ENCODE measurements at regions of chr6 and their contacts with region 1.

Region 1: DNA sequence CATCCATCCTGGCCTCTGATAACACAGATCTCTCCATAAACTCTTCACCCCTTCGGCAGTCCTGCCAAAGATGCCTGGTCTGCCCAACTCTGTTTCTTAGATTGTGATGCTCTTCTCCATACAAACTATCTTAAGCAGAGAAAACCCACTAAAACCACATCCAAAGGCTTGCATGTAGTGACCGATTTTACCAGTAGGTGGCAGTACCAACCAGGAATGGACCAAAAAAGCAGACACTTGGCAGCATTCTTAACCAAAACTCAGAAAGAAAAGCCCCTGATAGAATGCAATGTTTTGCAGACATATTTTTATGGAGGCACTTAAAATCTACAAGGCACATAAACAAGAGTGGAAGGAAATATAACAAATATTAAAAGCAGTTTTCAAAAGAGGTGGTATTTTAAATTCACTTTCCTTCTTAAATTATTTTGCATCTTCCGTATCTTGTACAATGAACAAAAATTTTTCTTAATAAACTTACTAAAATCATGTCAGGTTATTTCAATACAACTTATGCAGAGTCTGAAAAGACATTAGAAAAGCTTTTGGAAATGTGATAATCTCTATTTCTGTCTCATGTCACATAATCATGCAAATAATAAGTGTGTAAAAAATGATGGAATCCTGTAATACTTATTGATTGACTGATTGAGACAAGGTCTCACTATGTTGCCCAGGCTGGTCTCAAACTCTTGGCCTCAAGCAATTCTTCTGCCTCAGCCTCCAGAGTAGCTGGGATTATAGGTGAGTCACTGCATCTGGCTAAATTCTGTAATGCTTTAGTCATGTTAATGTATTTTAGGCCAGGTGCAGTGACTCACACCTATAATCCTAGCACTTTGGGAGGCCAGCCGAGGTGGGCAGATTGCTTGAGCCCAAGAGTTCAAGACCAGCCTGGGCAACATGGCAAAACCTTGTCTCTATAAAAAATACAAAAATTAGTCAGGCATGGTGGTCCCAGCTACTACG is 29.4 kb downstream of the LRP11 start:
- DNase-seq: peak; percentile 79
- ATAC-seq: peak; percentile 74
- H3K4me3 ChIP-seq: no peak overlapping the region
- H3K27ac ChIP-seq: no peak overlapping the region
- H3K4me1 ChIP-seq: peaks cover 6% of the 10 kb centered on the region
- H3K27me3 ChIP-seq: no peaks in the 10 kb centered on the region
- CTCF ChIP-seq: peak; percentile 95
- POLR2A ChIP-seq: no peak
- RAD21 ChIP-seq: peak; percentile 94

Region 2: GRCh38 chr6:148869585-148869984 is 965.2 kb before region 1 on chr6:
- CTCF ChIA-PET with region 1: no interaction called
- POLR2A ChIA-PET with region 1: no interaction called
- dilution Hi-C with region 1: no loop called
- in situ Hi-C with region 1: no loop called
- intact Hi-C with region 1: no loop called
- DNase-seq: peak; percentile 98
- ATAC-seq: peak; percentile 71
- H3K4me3 ChIP-seq: no peak overlapping the region
- H3K27ac ChIP-seq: no peak overlapping the region
- H3K4me1 ChIP-seq: peaks cover 14% of the 10 kb centered on the region
- H3K27me3 ChIP-seq: no peaks in the 10 kb centered on the region
- CTCF ChIP-seq: no peak
- POLR2A ChIP-seq: no peak
- RAD21 ChIP-seq: no peak

Region 3: GRCh38 chr6:149696901-149697300 is 137.9 kb before region 1 on chr6:
- CTCF ChIA-PET with region 1: no interaction called
- POLR2A ChIA-PET with region 1: no interaction called
- dilution Hi-C with region 1: no loop called
- in situ Hi-C with region 1: no loop called
- intact Hi-C with region 1: no loop called
- DNase-seq: peak; percentile 52
- ATAC-seq: peak; percentile 84
- H3K4me3 ChIP-seq: no peak overlapping the region
- H3K27ac ChIP-seq: no peak overlapping the region
- H3K4me1 ChIP-seq: peaks cover 3% of the 10 kb centered on the region; the same call in 1 of the 2 replicates
- H3K27me3 ChIP-seq: no peaks in the 10 kb centered on the region
- CTCF ChIP-seq: no peak
- POLR2A ChIP-seq: no peak
- RAD21 ChIP-seq: no peak

Region 4: DNA sequence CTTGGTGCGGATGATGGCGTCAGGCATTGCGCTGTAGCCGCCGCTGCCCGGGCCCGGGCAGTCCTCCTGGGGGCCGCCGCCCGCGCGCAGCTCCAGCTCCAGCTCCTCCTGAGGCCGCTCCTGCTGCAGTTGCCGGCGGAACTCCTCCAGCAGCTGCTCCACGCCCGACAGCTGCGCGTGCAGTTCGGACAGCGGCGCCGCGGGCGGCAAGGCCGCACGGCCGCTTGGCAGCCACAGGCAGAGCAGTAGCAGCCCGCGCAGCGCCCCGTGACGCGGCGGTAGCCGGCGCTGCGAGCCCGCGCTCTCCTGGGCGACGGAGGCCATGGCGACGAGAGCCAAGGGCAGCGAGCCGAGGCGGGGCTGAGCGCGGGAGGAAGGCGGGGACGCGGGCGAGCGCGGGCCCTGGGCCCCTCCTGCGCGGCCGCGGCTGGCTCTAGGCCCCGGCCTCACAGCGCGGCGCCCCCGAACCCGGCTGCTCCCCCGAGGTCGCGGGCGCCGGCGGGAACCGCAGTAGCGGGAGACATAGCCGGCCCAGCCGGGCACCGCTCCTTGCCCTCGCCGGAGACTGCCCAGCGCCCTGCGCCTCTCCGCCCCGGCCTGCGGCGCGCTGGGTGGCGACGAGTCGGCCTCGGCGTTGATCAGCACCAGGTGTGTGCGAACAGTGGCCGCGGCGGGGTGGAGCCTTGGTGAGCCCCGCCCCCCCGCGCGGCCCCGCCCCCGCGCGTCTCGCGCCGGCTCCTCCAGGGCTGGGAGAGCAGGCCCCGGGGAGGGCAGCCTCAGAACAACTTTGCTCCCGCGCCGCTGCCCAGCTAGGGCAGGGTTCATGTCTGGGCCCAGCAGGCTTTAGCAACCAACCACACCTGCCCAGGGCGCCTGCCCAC is 29.1 kb after region 1 on chr6 and contains the start of gene LRP11:
- CTCF ChIA-PET with region 1: interaction called, 5 read pairs
- POLR2A ChIA-PET with region 1: no interaction called
- dilution Hi-C with region 1: no loop called
- in situ Hi-C with region 1: loop called (anchors 5 kb)
- intact Hi-C with region 1: loop called (anchors 1 kb)
- DNase-seq: peak; percentile 74
- ATAC-seq: peak; percentile 81
- H3K4me3 ChIP-seq: peak within 1 kb of the TSS; percentile 54
- H3K27ac ChIP-seq: peak within 1 kb of the TSS; percentile 89
- H3K4me1 ChIP-seq: peaks cover 24% of the 10 kb centered on the region
- H3K27me3 ChIP-seq: no peaks in the 10 kb centered on the region
- CTCF ChIP-seq: 0 out of 2 replicates have a peak, but pooled peaks have one; percentile 3
- POLR2A ChIP-seq: peak; percentile 59
- RAD21 ChIP-seq: peak; percentile 1; the same call in 1 of the 2 replicates
- total RNA-seq, gene LRP11: 63.8 and 74.7 TPM in 2 replicates

Region 5: GRCh38 chr6:150016324-150017185 is 181.8 kb after region 1 on chr6:
- CTCF ChIA-PET with region 1: no interaction called
- POLR2A ChIA-PET with region 1: no interaction called
- dilution Hi-C with region 1: no loop called
- in situ Hi-C with region 1: no loop called
- intact Hi-C with region 1: loop called (anchors 2 kb)
- DNase-seq: peak; percentile 61
- ATAC-seq: peak; percentile 88
- H3K4me3 ChIP-seq: no peak overlapping the region
- H3K27ac ChIP-seq: no peak overlapping the region
- H3K4me1 ChIP-seq: no peaks in the 10 kb centered on the region
- H3K27me3 ChIP-seq: peaks cover 51% of the 10 kb centered on the region
- CTCF ChIP-seq: peak; percentile 63
- POLR2A ChIP-seq: no peak
- RAD21 ChIP-seq: peak; percentile 67

Region 6: GRCh38 chr6:151067684-151068596 is 1233.1 kb after region 1 on chr6:
- CTCF ChIA-PET with region 1: no interaction called
- POLR2A ChIA-PET with region 1: no interaction called
- dilution Hi-C with region 1: no loop called
- in situ Hi-C with region 1: loop called (anchors 25 kb)
- intact Hi-C with region 1: no loop called
- DNase-seq: peak; percentile 97
- ATAC-seq: peak; percentile 72
- H3K4me3 ChIP-seq: no peak overlapping the region
- H3K27ac ChIP-seq: peak overlapping the region; percentile 90
- H3K4me1 ChIP-seq: peaks cover 24% of the 10 kb centered on the region
- H3K27me3 ChIP-seq: no peaks in the 10 kb centered on the region
- CTCF ChIP-seq: no peak
- POLR2A ChIP-seq: no peak; the same call in 1 of the 2 replicates
- RAD21 ChIP-seq: no peak; the same call in 1 of the 2 replicates

Measured in IMR-90 (cell line).